ENCODE measurements at regions of chr16 and their contacts with region 1.

Region 1: GRCh38 chr16:66830422-66831404 is at the start of gene NAE1:
- DNase-seq: peak; percentile 96
- CTCF ChIP-seq: peak; percentile 99

Region 2: GRCh38 chr16:66751303-66751991 is 79.3 kb before region 1 on chr16 and contains the start of gene DYNC1LI2:
- CTCF ChIA-PET with region 1: interaction called, 14 read pairs
- POLR2A ChIA-PET with region 1: no interaction called
- DNase-seq: peak; percentile 96
- CTCF ChIP-seq: peak; percentile 96

Region 3: DNA sequence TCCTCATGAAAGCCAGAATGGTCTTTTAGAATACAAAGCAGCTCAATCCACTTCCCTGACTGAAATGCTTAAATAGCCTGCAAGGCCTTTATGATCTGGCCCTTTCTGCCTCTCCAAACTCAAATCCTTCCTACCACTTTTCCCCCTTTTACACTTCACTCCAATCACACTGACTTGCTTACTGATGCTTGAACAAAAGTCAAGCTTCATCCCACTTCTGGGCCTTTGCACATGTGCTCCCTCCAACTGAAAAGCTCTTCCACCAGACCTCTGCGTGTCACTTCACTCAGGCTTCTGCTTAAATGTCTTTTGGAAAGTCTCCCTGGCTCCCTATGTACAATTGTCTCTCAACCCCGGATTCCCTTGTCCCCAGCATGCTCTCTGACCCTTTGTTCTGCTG is 16.0 kb before region 1 on chr16:
- CTCF ChIA-PET with region 1: interaction called, 51 read pairs
- POLR2A ChIA-PET with region 1: interaction called, 4 read pairs
- DNase-seq: no peak
- CTCF ChIP-seq: no peak

Region 4: GRCh38 chr16:66850115-66850815 is 19.6 kb after region 1 on chr16:
- CTCF ChIA-PET with region 1: interaction called, 68 read pairs
- POLR2A ChIA-PET with region 1: no interaction called
- DNase-seq: no peak
- CTCF ChIP-seq: no peak

Measured in GM10248 (cell line).